ENCODE measurements at regions of chr13 and their contacts with region 1.

Region 1: GRCh38 chr13:20703780-20704445 is 414 bp downstream of the IL17D start:
- DNase-seq: peak; percentile 97
- CTCF ChIP-seq: peak; percentile 72

Region 2: DNA sequence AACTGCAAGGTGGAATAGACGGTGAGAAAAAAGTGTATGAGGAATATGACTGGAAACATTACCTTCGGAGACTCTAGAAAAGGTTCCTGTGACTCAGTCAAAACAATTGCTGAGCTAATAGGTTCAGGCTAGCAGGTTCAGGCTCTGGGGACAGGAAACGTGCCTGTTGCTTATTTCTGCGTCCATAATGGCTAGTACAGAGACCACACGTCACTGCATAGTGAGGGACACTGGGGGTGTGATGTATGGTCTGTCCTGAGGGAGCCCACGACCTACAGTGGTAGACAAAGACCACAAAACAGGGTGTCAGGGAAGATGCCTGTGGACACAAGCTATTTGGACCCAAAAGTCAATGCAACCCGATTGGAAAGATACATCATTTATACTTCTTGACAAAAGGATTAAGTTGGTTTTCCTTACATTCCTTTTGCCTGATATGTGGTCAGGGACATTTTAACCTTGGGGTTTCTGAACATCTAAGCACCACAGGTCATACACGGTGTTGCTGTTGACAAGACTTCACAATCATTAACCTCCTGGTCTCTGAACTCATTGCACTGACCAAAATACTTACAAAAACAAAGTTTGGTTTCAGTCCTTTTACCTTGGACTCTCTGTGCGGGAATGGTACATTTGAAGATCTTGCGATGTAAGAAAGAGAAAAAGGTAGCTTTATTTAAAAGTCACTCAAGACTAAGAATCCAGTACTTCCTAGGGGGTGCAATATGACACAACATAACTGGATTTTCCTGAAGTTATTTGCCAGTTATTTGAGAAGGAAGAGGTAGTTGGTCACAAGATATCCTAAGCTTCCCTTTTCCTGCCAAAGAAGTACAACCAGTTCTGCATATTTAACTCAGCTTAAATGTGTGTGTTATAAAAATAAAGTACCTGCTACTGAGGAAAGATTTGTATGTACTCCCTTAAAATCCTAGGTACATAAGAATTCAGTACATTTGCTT is 198.2 kb before region 1 on chr13:
- in situ Hi-C with region 1: loop called (anchors 10 kb)
- DNase-seq: no peak
- CTCF ChIP-seq: no peak